ENCODE measurements at regions of chr4 and their contacts with region 1.

Region 1: GRCh38 chr4:52659001-52659721 is at the start of gene USP46:
- DNase-seq: peak; percentile 83 to 85
- ATAC-seq: peak; percentile 86 to 91 (median 90)
- H3K4me3 ChIP-seq: peak within 1 kb of the TSS; percentile 87
- H3K27ac ChIP-seq: peak within 1 kb of the TSS; percentile 96
- H3K4me1 ChIP-seq: peaks cover 22% of the 10 kb centered on the region
- H3K27me3 ChIP-seq: peaks cover 0 to 2% (median 0%) of the 10 kb centered on the region in 3 donors
- CTCF ChIP-seq: no peak
- total RNA-seq, gene USP46: 12.4 to 28.2 (median 21.3) TPM

Region 2: GRCh38 chr4:52234561-52235440 is 424.4 kb before region 1 on chr4:
- intact Hi-C with region 1: loop called in 1 of 2 experiments (anchors 10 kb)
- DNase-seq: no peak
- ATAC-seq: peak; percentile 43 to 69 (median 55)
- H3K4me3 ChIP-seq: no peak overlapping the region
- H3K27ac ChIP-seq: no peak overlapping the region
- H3K4me1 ChIP-seq: no peaks in the 10 kb centered on the region
- H3K27me3 ChIP-seq: no peaks in the 10 kb centered on the region
- CTCF ChIP-seq: peak; percentile 63

Region 3: DNA sequence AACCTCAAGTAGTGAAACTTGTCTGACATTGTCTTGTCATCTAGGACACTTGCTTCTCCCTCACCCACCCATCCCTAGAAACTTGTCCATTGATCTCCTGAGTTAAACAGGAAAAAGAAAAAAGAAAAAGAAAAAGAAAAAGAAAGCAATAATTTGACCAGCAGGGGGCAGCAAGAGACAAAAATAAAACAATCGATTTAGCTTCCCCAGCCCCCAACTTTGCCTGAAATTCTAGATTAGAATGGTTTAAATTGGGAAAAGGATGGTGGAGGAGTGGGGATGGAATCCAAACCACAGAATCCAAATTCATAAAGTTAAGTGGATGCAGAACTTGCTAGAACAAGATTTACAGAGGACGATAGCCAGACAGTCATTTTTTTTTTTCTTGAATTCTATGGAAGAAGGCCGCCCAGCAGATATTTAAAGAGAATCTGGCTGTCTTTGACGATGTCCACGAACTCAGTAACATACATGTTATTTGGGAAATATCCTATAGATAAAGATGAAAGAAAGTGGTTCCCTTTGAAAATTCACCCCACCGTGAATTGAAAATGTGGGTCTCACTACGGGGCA is 282.9 kb before region 1 on chr4:
- intact Hi-C with region 1: loop called in 1 of 2 experiments (anchors 5 kb)
- DNase-seq: no peak
- ATAC-seq: no peak
- H3K4me3 ChIP-seq: no peak overlapping the region
- H3K27ac ChIP-seq: no peak overlapping the region
- H3K4me1 ChIP-seq: no peaks in the 10 kb centered on the region
- H3K27me3 ChIP-seq: no peaks in the 10 kb centered on the region
- CTCF ChIP-seq: peak; percentile 63

Region 4: GRCh38 chr4:52595001-52595400 is 64.2 kb before region 1 on chr4:
- intact Hi-C with region 1: loop called (anchors 5 to 10 kb)
- DNase-seq: no peak
- ATAC-seq: no peak
- H3K4me3 ChIP-seq: no peak overlapping the region
- H3K27ac ChIP-seq: no peak overlapping the region
- H3K4me1 ChIP-seq: no peaks in the 10 kb centered on the region
- H3K27me3 ChIP-seq: no peaks in the 10 kb centered on the region
- CTCF ChIP-seq: no peak

Region 5: GRCh38 chr4:52680381-52680780 is 21.2 kb after region 1 on chr4:
- intact Hi-C with region 1: loop called in 1 of 2 experiments (anchors 2 kb)
- DNase-seq: no peak
- ATAC-seq: no peak
- H3K4me3 ChIP-seq: no peak overlapping the region
- H3K27ac ChIP-seq: no peak overlapping the region
- H3K4me1 ChIP-seq: no peaks in the 10 kb centered on the region
- H3K27me3 ChIP-seq: no peaks in the 10 kb centered on the region
- CTCF ChIP-seq: no peak

Region 6: DNA sequence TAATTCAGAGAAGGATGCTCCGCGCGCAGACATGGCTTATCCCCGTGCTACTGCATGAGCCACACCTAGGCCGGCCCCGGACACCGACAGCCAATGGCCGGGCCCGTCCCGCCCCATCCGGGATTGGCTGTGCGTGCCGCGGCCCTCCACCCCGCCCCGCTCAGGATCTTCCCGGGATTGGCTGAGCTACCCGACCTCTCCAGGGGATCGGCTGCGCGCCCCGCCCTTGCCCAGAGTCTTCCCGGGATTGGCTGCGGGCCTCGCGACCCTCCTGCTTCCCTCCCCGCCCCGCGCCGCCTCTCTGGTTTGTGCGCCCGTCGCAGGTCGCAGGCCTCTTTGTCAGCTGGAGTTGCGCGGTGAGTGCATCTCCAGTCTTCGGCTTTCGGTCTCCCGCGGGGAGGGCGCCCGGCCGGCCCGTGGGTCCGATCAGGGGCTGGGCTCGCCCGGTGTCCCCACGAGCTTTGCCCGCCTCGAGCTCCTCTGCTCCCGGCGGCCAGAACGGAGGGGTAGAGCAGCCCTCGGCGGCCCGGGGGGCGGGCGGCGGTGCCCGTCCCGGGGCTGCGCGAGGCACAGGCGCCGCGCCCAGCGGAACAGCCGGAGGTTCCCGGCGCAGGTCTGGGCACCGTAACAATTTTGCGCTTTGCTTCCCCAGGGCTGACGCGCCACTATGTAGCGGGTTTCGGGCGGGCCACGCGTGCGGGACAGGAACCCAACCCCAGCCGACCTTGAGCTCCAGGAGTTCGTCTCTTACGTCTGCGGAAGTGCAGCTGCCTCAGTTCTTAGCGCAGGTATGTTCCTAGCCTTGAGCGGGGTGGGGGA is 53.2 kb after region 1 on chr4:
- intact Hi-C with region 1: loop called (anchors 5 kb)
- DNase-seq: peak; percentile 99
- ATAC-seq: peak; percentile 98 to 99 (median 98)
- H3K4me3 ChIP-seq: peak overlapping the region; percentile 93
- H3K27ac ChIP-seq: peak overlapping the region; percentile 97
- H3K4me1 ChIP-seq: peaks cover 25% of the 10 kb centered on the region
- H3K27me3 ChIP-seq: no peaks in the 10 kb centered on the region
- CTCF ChIP-seq: no peak

Measured in psoas muscle (tissue), 8 donors.